Activated B cell treated with CpG ODN at 0.5 μM for 24 hours (primary cell): ENCODE measurements at regions of chr1 and their contacts with region 1.

Region 1: GRCh38 chr1:158998781-158999161 is 10.9 kb upstream of the IFI16 start:
- DNase-seq: no peak
- ATAC-seq: peak; percentile 83
- H3K4me3 Mint-ChIP-seq: no peak overlapping the region
- H3K27ac Mint-ChIP-seq: no peak overlapping the region
- H3K4me1 Mint-ChIP-seq: peaks cover 20% of the 10 kb centered on the region
- H3K27me3 Mint-ChIP-seq: no peaks in the 10 kb centered on the region
- CTCF ChIP-seq: peak; percentile 59

Region 2: GRCh38 chr1:157963713-157964112 is 1035.1 kb before region 1 on chr1:
- CTCF ChIA-PET with region 1: no interaction called
- POLR2A ChIA-PET with region 1: no interaction called
- intact Hi-C with region 1: loop called (anchors 1 kb)
- DNase-seq: peak; percentile 52
- ATAC-seq: peak; percentile 57
- H3K4me3 Mint-ChIP-seq: no peak overlapping the region
- H3K27ac Mint-ChIP-seq: no peak overlapping the region
- H3K4me1 Mint-ChIP-seq: no peaks in the 10 kb centered on the region
- H3K27me3 Mint-ChIP-seq: peaks cover 22% of the 10 kb centered on the region
- CTCF ChIP-seq: peak; percentile 80

Region 3: DNA sequence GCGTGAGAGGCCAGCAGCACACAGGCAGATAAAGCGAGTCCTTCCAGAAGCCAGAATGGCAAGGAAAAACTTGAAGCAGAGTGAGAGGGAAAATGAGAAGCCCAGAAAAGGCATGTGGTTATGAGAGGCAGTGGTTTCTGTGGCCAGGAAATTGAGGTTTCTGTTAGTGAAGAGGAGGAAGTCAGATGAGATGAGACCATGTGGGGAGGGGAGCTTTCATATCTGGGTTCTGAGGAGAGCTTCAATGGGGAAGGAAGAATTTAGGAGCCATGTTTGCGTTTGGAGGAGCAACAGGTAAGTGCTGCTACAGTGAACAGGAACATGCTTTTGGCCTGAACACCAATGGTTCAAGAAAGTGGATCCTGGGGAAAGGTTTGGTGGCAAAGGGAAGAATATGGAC is 750.7 kb before region 1 on chr1:
- CTCF ChIA-PET with region 1: interaction called, 4 read pairs
- POLR2A ChIA-PET with region 1: no interaction called
- intact Hi-C with region 1: loop called (anchors 2 kb)
- DNase-seq: peak; percentile 32
- ATAC-seq: peak; percentile 83
- H3K4me3 Mint-ChIP-seq: peak overlapping the region; percentile 26
- H3K27ac Mint-ChIP-seq: peak overlapping the region; percentile 59
- H3K4me1 Mint-ChIP-seq: peaks cover 51% of the 10 kb centered on the region
- H3K27me3 Mint-ChIP-seq: no peaks in the 10 kb centered on the region
- CTCF ChIP-seq: no peak

Region 4: DNA sequence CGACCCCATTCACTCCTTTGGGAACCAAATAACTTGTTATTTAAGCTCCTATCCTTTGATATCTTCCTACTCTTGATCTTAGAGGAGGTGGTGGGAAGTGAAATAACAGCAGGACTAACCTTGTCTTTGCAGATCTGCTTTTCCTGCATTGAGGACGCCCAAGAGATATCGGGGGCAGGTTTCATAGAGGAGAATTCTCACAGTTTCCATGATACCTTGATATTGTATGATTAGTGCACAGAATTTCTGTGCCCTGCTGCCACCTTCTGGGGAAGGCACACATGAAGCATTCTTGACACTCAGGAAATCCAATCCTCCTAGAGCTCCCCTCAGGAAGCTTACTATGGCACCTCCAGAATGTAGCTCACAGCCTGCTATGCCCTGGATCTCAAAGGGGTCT is 669.0 kb before region 1 on chr1:
- CTCF ChIA-PET with region 1: interaction called, 5 read pairs
- POLR2A ChIA-PET with region 1: interaction called, 3 read pairs
- intact Hi-C with region 1: loop called (anchors 1 kb)
- DNase-seq: no peak
- ATAC-seq: peak; percentile 47
- H3K4me3 Mint-ChIP-seq: no peak overlapping the region
- H3K27ac Mint-ChIP-seq: no peak overlapping the region
- H3K4me1 Mint-ChIP-seq: peaks cover 26% of the 10 kb centered on the region
- H3K27me3 Mint-ChIP-seq: no peaks in the 10 kb centered on the region
- CTCF ChIP-seq: no peak

Region 5: DNA sequence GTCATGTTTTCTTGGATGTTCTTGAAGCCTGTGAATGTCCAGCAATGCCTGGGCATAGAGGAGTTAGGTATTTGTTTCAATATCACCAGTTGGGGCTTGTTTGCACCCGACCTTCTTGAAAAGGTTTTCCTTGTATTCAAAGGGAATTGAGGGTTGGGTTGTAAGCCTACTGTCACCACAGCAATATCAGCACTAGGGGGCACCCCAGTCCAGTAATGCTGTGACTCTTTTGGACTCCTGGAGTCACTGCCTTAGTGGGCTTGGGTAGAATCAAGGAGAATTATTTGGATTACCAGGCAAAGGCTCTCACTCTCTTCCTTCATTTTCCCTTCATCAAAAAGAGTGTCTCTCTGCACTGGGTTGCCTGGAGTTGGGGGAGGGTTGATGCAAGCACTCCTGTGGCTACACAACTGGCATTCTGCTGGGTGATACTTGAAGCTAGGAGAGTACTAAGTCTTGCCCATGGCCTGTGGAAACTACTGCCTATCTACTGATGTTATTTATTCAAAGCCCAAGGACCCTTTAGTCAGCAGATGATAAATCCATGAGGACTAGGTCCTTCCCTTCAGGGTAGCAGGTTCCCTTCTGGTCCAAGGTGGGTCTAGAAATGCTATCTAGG is 492.3 kb before region 1 on chr1:
- CTCF ChIA-PET with region 1: interaction called, 10 read pairs
- POLR2A ChIA-PET with region 1: no interaction called
- intact Hi-C with region 1: loop called (anchors 1 kb)
- DNase-seq: no peak
- ATAC-seq: peak; percentile 56
- H3K4me3 Mint-ChIP-seq: no peak overlapping the region
- H3K27ac Mint-ChIP-seq: no peak overlapping the region
- H3K4me1 Mint-ChIP-seq: no peaks in the 10 kb centered on the region
- H3K27me3 Mint-ChIP-seq: peaks cover 18% of the 10 kb centered on the region
- CTCF ChIP-seq: no peak

Region 6: DNA sequence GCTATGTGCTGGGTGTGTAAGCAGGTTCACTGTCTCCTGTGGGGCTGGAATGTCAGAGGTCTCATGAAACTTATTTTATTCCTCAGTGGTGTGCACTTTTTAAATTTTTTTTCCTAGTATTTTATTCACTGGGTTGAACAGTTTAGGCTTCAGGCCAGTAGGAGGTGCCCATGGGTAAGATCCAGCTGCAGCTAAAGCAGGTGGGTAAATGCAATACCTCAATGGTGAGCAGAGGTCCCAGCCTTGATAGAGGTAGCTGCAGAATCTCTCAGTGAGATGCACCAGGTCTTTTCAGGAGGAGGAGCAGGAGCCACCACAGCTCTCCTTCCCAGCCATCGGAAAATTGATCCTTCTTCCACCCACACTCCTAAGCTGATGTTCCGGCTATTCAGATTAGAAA is 205.2 kb before region 1 on chr1:
- CTCF ChIA-PET with region 1: interaction called, 16 read pairs
- POLR2A ChIA-PET with region 1: interaction called, 3 read pairs
- intact Hi-C with region 1: loop called (anchors 1 kb)
- DNase-seq: no peak
- ATAC-seq: peak; percentile 37
- H3K4me3 Mint-ChIP-seq: no peak overlapping the region
- H3K27ac Mint-ChIP-seq: no peak overlapping the region
- H3K4me1 Mint-ChIP-seq: no peaks in the 10 kb centered on the region
- H3K27me3 Mint-ChIP-seq: peaks cover 6% of the 10 kb centered on the region
- CTCF ChIP-seq: no peak

Region 7: GRCh38 chr1:160108888-160109662 is 1110.3 kb after region 1 on chr1:
- CTCF ChIA-PET with region 1: no interaction called
- POLR2A ChIA-PET with region 1: no interaction called
- intact Hi-C with region 1: no loop called
- DNase-seq: no peak
- ATAC-seq: peak; percentile 61
- H3K4me3 Mint-ChIP-seq: no peak overlapping the region
- H3K27ac Mint-ChIP-seq: no peak overlapping the region
- H3K4me1 Mint-ChIP-seq: peaks cover 5% of the 10 kb centered on the region
- H3K27me3 Mint-ChIP-seq: peaks cover 11% of the 10 kb centered on the region
- CTCF ChIP-seq: no peak